ENCODE measurements at regions of chr7 and their contacts with region 1.

Region 1: DNA sequence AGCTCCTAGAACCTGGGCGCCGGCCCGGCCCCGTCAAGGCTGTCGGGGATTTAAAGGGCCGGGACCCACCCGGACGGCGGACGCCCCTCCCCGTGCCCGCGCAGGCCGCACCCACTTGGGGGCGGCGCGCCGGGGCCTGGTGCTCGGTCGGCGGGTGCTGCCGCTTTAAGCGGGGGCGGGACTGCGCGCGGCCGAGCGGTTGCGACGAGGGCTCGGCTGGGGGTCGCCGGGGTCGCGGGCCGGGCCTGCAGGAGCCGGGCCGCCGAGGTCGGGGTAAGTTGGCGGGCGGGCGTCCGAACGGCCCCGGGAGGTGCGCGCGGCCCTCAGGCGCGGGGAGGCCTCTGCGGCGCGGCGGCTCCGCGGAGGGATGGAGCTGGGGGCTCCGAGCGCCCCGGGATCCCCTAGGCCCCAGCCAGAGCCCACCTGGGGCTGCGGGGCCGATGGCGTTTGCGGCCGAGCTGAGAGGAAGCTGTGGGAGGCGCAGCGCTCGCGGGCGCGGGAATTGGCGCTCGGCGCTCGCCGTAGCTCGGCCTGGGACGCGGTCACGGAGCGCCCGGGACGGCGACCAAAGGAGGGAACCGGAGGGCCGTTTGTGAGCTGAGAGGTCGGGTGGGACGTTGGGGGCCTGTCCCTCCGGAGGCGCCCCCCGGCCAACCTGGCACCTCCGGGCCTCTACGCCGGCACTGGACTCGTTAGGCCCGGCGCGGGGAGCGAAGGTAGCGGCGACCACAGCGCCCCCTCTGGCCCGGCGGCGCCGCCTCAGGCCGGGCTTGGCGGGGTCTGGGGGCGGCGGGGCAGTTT is at the start of gene TRRAP:
- DNase-seq: peak; percentile 58 to 79
- ATAC-seq: peak; percentile 85 to 92
- H3K4me3 ChIP-seq: peak within 1 kb of the TSS; percentile 82
- H3K27ac ChIP-seq: peak within 1 kb of the TSS; percentile 91 to 100
- H3K4me1 ChIP-seq: peaks cover 9% of the 10 kb centered on the region; the same call in 2 of the 3 replicates
- CTCF ChIP-seq: peak; percentile 89
- EP300 ChIP-seq: no peak
- POLR2A ChIP-seq: peak; percentile 34
- RAD21 ChIP-seq: no peak
- polyA plus RNA-seq, gene TRRAP: 22.1 and 28.5 TPM in 2 replicates

Region 2: DNA sequence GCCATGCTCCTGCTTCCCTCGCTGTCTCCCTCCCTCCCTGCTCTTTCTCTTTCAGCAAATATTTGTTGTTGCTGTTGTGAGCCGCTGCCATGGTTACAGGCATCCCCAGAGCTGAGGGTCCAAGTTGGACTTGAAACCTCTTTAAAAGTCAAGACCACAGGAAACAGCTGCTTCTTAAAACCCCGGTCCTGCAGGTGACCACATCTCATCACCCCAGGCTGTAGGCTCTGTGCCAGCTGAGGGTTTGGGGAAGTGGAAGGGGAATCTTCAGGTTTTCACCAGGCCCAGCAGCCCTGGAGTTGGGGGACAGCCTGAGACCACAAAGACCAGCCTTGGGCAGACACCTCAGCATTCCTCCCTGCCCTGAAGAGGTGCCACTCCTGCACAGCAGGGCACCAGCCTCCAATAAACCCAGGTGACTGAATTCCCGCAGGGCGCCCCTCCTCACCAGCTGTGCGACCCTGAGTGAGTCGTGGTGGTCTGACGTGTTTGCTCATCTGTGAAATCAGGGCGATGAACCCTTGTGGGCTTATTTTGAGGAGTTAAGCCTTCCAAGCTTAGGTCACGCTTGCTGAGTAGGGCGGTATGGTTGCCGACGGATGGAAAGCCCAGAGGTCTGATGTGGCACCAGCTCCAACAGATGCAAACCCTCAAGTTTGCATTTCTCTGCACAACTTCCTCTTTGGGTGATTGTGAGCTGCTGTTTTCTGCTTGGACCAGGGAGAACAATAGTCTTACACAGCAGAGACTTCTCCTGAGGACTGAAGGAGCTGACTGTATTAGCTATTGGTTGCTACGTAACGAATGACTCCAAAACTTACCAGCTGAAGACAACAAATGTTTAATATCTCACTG is 236.7 kb before region 1 on chr7:
- CTCF ChIA-PET with region 1: no interaction called
- POLR2A ChIA-PET with region 1: no interaction called
- DNase-seq: no peak
- ATAC-seq: no peak; a peak in 1 of 6 replicates
- H3K4me3 ChIP-seq: no peak overlapping the region
- H3K27ac ChIP-seq: no peak overlapping the region
- H3K4me1 ChIP-seq: no peaks in the 10 kb centered on the region
- CTCF ChIP-seq: no peak
- EP300 ChIP-seq: no peak
- POLR2A ChIP-seq: no peak
- RAD21 ChIP-seq: no peak

Region 3: DNA sequence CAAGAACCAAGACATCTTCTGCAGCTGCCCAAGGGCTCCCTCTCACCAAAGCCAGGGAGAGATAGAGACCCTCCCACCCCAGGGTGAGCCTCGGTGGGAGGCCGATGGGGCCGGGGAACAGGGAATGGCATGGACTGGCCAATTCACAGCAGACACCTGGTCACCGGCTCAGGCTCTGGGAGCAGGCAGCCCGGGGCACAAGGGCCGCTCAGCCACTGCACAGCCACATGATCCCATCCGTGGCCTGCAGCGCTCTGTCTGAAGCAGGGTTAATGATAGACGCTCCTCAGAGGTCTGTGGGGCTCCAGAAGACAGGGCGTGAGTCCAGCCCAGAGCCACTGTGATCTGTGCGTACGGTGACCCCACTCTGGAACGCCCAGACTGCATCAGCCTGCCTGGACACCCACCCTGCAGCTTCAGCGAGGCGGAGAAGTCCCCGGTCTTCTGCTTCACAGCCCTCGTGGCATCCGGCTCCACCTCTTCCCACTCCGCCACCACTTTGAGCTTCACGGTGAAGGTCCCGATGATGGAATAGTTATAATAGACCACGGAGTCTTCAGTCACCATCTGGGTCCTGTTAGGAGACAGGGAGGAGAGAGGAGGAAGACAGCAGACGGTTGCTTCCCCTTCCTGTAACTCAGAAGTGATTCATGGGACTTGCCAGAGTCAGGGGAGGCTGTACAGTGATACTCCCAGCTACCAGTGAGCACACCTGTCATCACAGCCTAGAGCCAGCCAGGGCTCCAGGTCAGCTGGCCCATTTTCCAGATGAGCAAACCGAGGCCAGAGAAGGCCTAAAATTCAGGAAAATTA is 22.7 kb before region 1 on chr7:
- CTCF ChIA-PET with region 1: interaction called, 10 read pairs
- POLR2A ChIA-PET with region 1: no interaction called
- DNase-seq: no peak
- ATAC-seq: peak; percentile 17 to 33; a peak in 2 of 6 replicates
- H3K4me3 ChIP-seq: no peak overlapping the region
- H3K27ac ChIP-seq: no peak overlapping the region
- H3K4me1 ChIP-seq: peaks cover 10% of the 10 kb centered on the region; the same call in 2 of the 3 replicates
- CTCF ChIP-seq: no peak
- EP300 ChIP-seq: no peak
- POLR2A ChIP-seq: no peak
- RAD21 ChIP-seq: no peak

Region 4: GRCh38 chr7:98892609-98893008 is 14.0 kb after region 1 on chr7:
- CTCF ChIA-PET with region 1: interaction called, 25 read pairs
- POLR2A ChIA-PET with region 1: interaction called, 8 read pairs
- DNase-seq: no peak
- ATAC-seq: no peak
- H3K4me3 ChIP-seq: no peak overlapping the region
- H3K27ac ChIP-seq: no peak overlapping the region
- H3K4me1 ChIP-seq: no peaks in the 10 kb centered on the region
- CTCF ChIP-seq: no peak
- EP300 ChIP-seq: no peak
- POLR2A ChIP-seq: no peak
- RAD21 ChIP-seq: no peak

Region 5: GRCh38 chr7:98902523-98902922 is 24.0 kb after region 1 on chr7:
- CTCF ChIA-PET with region 1: interaction called, 14 read pairs
- POLR2A ChIA-PET with region 1: no interaction called
- DNase-seq: no peak
- ATAC-seq: no peak
- H3K4me3 ChIP-seq: no peak overlapping the region
- H3K27ac ChIP-seq: no peak overlapping the region
- H3K4me1 ChIP-seq: no peaks in the 10 kb centered on the region
- CTCF ChIP-seq: no peak
- EP300 ChIP-seq: no peak
- POLR2A ChIP-seq: no peak
- RAD21 ChIP-seq: no peak

Region 6: GRCh38 chr7:98978672-98979071 is 100.1 kb after region 1 on chr7:
- CTCF ChIA-PET with region 1: no interaction called
- POLR2A ChIA-PET with region 1: no interaction called
- DNase-seq: no peak
- ATAC-seq: no peak
- H3K4me3 ChIP-seq: no peak overlapping the region
- H3K27ac ChIP-seq: no peak overlapping the region
- H3K4me1 ChIP-seq: no peaks in the 10 kb centered on the region
- CTCF ChIP-seq: no peak
- EP300 ChIP-seq: no peak
- POLR2A ChIP-seq: no peak
- RAD21 ChIP-seq: no peak

Measured in A549 (cell line).